ENCODE measurements at regions of chr1 and their contacts with region 1.

Region 1: GRCh38 chr1:239814303-239814881 is 277.3 kb upstream of the FMN2 start:
- DNase-seq: peak; percentile 69
- ATAC-seq: peak; percentile 87
- H3K4me3 Mint-ChIP-seq: no peak overlapping the region
- H3K27ac Mint-ChIP-seq: peak overlapping the region; percentile 32
- H3K4me1 Mint-ChIP-seq: peaks cover 43% of the 10 kb centered on the region
- H3K27me3 Mint-ChIP-seq: no peaks in the 10 kb centered on the region

Region 2: GRCh38 chr1:239308701-239309333 is 505.6 kb before region 1 on chr1:
- CTCF ChIA-PET with region 1: no interaction called
- POLR2A ChIA-PET with region 1: no interaction called
- intact Hi-C with region 1: loop called in 1 of 2 experiments (anchors 2 kb)
- DNase-seq: peak; percentile 66
- ATAC-seq: peak; percentile 81
- H3K4me3 Mint-ChIP-seq: no peak overlapping the region
- H3K27ac Mint-ChIP-seq: no peak overlapping the region
- H3K4me1 Mint-ChIP-seq: no peaks in the 10 kb centered on the region
- H3K27me3 Mint-ChIP-seq: no peaks in the 10 kb centered on the region

Region 3: DNA sequence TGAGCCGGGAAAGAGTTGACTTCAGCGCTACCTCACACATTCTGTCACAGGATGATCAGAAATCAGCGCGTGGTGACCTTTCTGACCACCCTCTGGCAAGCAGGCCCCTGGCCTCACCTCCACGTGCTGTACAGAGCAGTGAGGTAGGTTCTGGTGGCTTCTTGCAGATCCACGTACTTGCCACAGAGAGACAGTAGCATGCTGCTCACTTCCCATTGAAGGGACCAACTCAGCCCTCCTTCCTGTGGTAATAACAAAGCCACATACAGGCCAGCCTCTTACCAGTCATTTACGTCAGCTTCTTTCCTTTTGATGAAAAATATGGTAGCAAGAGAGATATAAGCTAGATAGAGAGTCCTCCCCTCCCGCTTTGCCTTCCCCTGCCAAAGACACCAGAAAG is 227.3 kb before region 1 on chr1:
- CTCF ChIA-PET with region 1: no interaction called
- POLR2A ChIA-PET with region 1: no interaction called
- intact Hi-C with region 1: loop called in 1 of 2 experiments (anchors 5 kb)
- DNase-seq: peak; percentile 39
- ATAC-seq: peak; percentile 97
- H3K4me3 Mint-ChIP-seq: no peak overlapping the region
- H3K27ac Mint-ChIP-seq: no peak overlapping the region
- H3K4me1 Mint-ChIP-seq: peaks cover 9% of the 10 kb centered on the region
- H3K27me3 Mint-ChIP-seq: no peaks in the 10 kb centered on the region

Region 4: DNA sequence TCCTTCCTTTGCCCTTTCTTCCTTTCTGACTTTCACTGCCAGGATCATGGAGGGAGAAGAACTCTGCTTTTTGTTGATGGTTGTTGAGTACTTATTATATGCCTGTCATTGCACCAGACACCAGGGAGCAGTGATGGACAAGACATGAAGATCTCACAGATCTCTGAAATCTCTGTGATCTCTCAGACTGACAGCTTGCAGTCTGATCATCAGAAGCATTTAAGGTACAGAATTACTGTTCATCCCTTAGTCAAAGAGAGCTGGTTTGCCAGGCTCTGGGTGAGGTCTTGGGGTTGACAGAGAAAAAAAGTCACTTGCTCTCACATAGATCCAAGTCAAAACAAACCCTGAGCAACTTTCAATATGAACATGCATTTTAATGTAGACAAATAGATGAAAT is 22.2 kb before region 1 on chr1:
- CTCF ChIA-PET with region 1: interaction called, 3 read pairs
- POLR2A ChIA-PET with region 1: no interaction called
- intact Hi-C with region 1: loop called (anchors 1 to 2 kb)
- DNase-seq: peak; percentile 51
- ATAC-seq: peak; percentile 99
- H3K4me3 Mint-ChIP-seq: no peak overlapping the region
- H3K27ac Mint-ChIP-seq: peak overlapping the region; percentile 22
- H3K4me1 Mint-ChIP-seq: peaks cover 20% of the 10 kb centered on the region
- H3K27me3 Mint-ChIP-seq: no peaks in the 10 kb centered on the region